PC-9 (cell line): ENCODE measurements at regions of chr12 and their contacts with region 1.

Region 1: DNA sequence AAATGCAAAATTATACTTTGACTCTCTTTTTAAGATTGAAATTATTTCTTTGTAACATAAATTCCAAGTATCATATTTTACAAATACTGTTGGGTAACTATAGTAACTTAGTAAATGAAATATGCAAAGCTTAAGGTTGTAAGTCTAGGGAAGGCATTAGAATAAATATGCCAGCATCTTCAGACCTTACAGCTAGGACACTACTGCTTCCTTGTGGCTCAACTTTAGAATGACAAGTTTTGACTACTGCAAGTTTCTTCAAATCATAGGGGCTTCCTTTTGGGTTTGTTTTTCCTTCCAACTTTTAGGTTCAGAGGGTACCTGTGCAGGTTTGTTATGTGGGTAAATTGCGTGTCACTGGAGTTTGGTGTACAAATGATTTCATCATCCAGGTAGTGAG is 17.7 kb upstream of the ANP32D start:
- DNase-seq: no peak
- H3K4me3 ChIP-seq: no peak overlapping the region
- H3K27ac ChIP-seq: no peak overlapping the region
- H3K4me1 ChIP-seq: no peaks in the 10 kb centered on the region
- H3K27me3 ChIP-seq: peaks cover 29% of the 10 kb centered on the region
- CTCF ChIP-seq: peak; percentile 66

Region 2: GRCh38 chr12:47286676-47287075 is 1168.0 kb before region 1 on chr12:
- CTCF ChIA-PET with region 1: interaction called, 10 read pairs
- POLR2A ChIA-PET with region 1: no interaction called
- intact Hi-C with region 1: no loop called
- DNase-seq: no peak
- H3K4me3 ChIP-seq: no peak overlapping the region
- H3K27ac ChIP-seq: no peak overlapping the region
- H3K4me1 ChIP-seq: no peaks in the 10 kb centered on the region
- H3K27me3 ChIP-seq: no peaks in the 10 kb centered on the region
- CTCF ChIP-seq: no peak